Prostate gland (tissue), 2 donors: ENCODE measurements at regions of chr10 and their contacts with region 1.

Region 1: GRCh38 chr10:93816123-93816747 is 58.5 kb downstream of the LGI1 start:
- DNase-seq: peak; percentile 51
- H3K4me3 ChIP-seq: no peak overlapping the region
- H3K27ac ChIP-seq: no peak overlapping the region
- H3K4me1 ChIP-seq: no peaks in the 10 kb centered on the region
- H3K27me3 ChIP-seq: no peaks in the 10 kb centered on the region
- CTCF ChIP-seq: peak; percentile 26 to 76 (median 62)
- POLR2A ChIP-seq: no peak

Region 2: DNA sequence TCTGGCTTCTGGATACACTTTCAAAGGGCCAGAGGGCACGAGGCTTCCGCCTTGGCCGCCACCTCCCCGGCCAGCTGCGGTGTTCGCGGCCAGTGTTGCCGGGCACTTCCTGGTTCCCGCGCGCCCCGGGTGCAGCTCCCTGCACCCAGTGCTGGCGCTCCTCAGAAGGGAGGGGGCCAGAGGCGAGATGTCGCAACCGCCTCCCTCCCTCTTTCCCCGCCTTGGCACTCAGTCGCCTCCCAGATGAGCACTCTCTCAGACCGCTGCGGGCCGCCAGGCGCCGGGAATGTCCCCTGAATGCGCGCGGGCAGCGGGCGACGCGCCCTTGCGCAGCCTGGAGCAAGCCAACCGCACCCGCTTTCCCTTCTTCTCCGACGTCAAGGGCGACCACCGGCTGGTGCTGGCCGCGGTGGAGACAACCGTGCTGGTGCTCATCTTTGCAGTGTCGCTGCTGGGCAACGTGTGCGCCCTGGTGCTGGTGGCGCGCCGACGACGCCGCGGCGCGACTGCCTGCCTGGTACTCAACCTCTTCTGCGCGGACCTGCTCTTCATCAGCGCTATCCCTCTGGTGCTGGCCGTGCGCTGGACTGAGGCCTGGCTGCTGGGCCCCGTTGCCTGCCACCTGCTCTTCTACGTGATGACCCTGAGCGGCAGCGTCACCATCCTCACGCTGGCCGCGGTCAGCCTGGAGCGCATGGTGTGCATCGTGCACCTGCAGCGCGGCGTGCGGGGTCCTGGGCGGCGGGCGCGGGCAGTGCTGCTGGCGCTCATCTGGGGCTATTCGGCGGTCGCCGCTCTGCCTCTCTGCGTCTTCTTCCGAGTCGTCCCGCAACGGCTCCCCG is 249.6 kb before region 1 on chr10 and contains the start of gene FFAR4:
- intact Hi-C with region 1: loop called (anchors 10 kb)
- DNase-seq: peak; percentile 12
- H3K4me3 ChIP-seq: peak within 1 kb of the TSS in 1 of 2 donors; percentile 15
- H3K27ac ChIP-seq: no peak within 1 kb of the TSS
- H3K4me1 ChIP-seq: peaks cover 4% of the 10 kb centered on the region
- H3K27me3 ChIP-seq: peaks cover 14% of the 10 kb centered on the region
- CTCF ChIP-seq: no peak
- POLR2A ChIP-seq: no peak
- total RNA-seq, gene FFAR4: 0.18 TPM in 1 of 2 donors, not detected in the other

Region 3: GRCh38 chr10:93701868-93702210 is 114.4 kb before region 1 on chr10:
- intact Hi-C with region 1: loop called (anchors 2 kb)
- DNase-seq: peak; percentile 8
- H3K4me3 ChIP-seq: peak overlapping the region; percentile 61 to 70
- H3K27ac ChIP-seq: peak overlapping the region; percentile 79 to 85
- H3K4me1 ChIP-seq: no peaks in the 10 kb centered on the region
- H3K27me3 ChIP-seq: no peaks in the 10 kb centered on the region
- CTCF ChIP-seq: no peak
- POLR2A ChIP-seq: no peak

Region 4: DNA sequence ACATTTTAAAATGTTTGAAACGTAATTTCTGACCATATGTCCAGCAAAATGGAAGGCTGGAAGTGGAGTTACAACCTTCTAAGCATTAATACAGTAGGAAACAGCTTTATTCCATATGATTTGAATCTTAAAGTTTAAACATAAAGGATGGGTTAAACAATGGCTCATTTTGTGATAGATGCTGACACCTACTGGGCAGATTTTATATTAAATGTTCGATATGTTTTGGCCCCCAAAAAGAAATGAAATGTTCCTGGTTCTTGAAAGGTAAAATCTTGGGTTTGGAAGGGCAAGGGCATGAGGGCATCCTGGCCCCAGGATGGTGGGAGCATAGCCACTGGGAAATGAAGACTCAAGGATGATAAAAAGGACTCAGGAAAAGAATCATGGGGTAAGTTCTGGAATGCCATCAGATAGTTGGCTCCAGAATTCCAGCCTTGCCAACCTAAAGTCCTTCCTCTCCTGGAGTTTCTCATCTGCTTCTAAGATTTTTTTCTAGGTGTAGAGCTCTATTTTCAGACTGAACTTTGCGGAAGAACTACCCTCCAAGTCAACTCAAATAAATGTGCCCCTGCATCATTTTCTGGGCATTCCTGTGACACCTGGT is 42.9 kb after region 1 on chr10:
- intact Hi-C with region 1: loop called (anchors 2 kb)
- DNase-seq: no peak
- H3K4me3 ChIP-seq: no peak overlapping the region
- H3K27ac ChIP-seq: no peak overlapping the region
- H3K4me1 ChIP-seq: no peaks in the 10 kb centered on the region
- H3K27me3 ChIP-seq: no peaks in the 10 kb centered on the region
- CTCF ChIP-seq: peak in 2 of 4 experiments; percentile 26 to 28
- POLR2A ChIP-seq: no peak